H1 (cell line): ENCODE measurements at regions of chr4 and their contacts with region 1.

Region 1: DNA sequence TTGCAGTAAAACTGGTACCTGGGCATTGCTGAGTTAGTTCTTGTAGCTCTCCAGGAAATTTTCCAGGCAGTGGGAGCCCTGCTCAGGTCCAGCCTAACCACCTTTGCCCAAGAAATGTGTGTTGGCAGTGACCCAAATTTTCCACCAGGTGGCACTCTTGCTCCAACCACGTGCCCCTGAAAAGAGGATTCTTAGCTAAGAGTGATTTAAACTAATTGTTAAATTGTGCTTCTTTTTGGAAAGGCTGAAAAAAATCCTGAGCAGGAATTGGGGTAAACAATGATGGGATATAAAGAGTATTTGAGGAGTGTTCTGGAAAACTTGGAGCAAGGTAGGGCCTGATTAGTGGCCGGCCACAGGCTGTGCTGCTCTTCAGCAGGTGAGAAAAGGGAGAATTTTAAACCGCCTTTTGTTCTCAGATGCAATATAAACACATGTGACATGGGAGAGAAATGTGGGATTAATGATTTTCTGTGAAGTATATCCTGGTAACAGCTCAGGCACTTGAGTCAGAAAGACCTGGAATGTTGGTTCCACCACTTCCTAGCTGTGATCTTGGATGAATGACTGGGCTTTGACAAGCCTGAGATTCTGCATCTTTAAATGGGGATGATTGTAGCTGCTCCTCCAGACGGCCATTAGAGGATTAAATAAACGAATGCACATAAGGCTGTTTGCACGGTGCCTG is 219.6 kb downstream of the PTTG2 start:
- DNase-seq: peak; percentile 41 to 86
- H3K4me3 ChIP-seq: no peak overlapping the region
- H3K27ac ChIP-seq: no peak overlapping the region
- H3K4me1 ChIP-seq: no peaks in the 10 kb centered on the region
- H3K27me3 ChIP-seq: no peaks in the 10 kb centered on the region
- CTCF ChIP-seq: peak; percentile 74 to 86 (median 84)
- EP300 ChIP-seq: no peak
- POLR2A ChIP-seq: no peak
- RAD21 ChIP-seq: peak; percentile 96 to 97

Region 2: DNA sequence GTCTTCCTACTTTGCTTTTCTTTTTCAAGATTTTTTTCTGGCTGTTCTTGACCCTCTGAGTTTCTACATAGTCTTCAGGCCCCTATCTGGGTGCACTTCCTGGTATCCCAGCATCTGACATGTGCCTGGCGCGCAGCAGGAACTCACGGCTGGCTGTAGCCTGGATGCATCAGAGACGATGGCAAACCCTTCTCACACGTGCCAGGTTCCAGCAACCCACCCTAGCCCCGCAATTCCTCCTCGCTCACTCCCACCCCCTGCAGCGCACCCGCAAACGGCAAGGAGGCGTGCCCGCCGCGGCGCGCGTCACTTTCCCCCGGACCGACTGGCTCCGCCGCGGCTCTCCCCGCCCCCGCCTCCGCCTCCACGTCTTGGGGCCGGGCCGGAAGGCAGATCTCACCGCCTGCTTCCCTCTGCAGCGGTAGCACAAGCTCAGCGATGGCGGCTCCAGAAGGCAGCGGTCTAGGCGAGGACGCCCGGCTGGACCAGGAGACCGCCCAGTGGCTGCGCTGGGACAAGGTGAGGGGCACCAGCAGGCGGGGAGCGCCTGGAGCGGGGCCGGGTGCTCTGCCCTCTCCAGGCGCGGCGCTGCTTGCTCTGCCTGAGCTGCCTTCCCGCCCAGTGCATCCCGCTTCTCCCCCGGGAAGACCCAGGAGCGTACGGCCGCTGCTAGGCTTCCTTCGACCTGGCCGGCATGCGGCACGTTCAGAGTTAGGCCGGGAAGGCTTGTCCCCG is 353.4 kb before region 1 on chr4 and contains the start of gene PGM2:
- CTCF ChIA-PET with region 1: no interaction called
- POLR2A ChIA-PET with region 1: no interaction called
- DNase-seq: peak; percentile 59 to 95
- H3K4me3 ChIP-seq: peak within 1 kb of the TSS; percentile 66 to 77 (median 72)
- H3K27ac ChIP-seq: peak within 1 kb of the TSS; percentile 41; the same call in 1 of the 2 replicates
- H3K4me1 ChIP-seq: peaks cover 0 to 5% (median 4%) of the 10 kb centered on the region in 4 experiments; a peak in 4 of 7 replicates
- H3K27me3 ChIP-seq: peaks cover 0 to 15% (median 7%) of the 10 kb centered on the region in 4 experiments; a peak in 5 of 7 replicates
- CTCF ChIP-seq: no peak
- EP300 ChIP-seq: no peak
- POLR2A ChIP-seq: peak; percentile 76 to 85
- RAD21 ChIP-seq: no peak
- total RNA-seq, gene PGM2: 34.3 and 38.0 TPM in 2 replicates

Region 3: DNA sequence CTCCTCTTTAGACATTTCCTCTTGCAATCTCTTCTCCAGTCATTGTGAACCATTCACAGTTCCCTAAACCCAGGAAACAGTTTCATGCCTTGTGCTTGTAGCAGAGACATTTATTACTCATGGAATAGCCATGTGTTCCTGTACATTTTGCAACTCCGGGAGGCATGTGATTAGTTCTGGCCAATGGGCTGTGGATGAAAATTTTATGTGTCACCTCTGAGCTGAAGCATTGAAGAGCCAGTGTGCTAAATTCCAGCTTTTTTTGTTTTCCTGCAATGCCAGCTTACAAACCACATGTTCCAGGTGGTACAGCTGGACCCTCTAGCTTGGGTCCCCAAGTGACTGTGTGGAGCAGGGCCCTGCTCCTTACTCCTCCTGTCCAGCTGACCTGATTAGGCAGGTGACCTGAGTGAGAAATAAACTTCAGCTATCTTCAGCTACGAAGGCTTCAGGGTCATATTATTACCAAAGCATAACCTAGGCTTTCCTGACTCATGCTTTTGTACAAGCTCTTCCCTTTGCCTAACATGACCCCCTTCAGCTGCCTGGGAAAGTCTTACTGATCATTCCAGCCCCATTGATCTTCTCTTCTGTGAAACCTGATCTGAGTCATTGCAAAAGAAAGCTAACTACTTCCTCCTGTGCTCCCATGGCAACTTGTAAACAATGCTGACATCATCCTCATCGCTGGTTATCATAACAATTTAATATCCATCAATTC is 19.2 kb before region 1 on chr4:
- CTCF ChIA-PET with region 1: interaction called, 13 read pairs
- POLR2A ChIA-PET with region 1: no interaction called
- DNase-seq: no peak
- H3K4me3 ChIP-seq: no peak overlapping the region
- H3K27ac ChIP-seq: no peak overlapping the region
- H3K4me1 ChIP-seq: peaks cover 0 to 10% (median 2%) of the 10 kb centered on the region in 4 experiments; a peak in 5 of 7 replicates
- H3K27me3 ChIP-seq: no peaks in the 10 kb centered on the region
- CTCF ChIP-seq: no peak
- EP300 ChIP-seq: peak in 1 of 2 experiments; percentile 77; a peak in 1 of 3 replicates
- POLR2A ChIP-seq: no peak
- RAD21 ChIP-seq: no peak

Region 4: GRCh38 chr4:38202242-38202641 is 22.4 kb after region 1 on chr4:
- CTCF ChIA-PET with region 1: interaction called, 19 read pairs
- POLR2A ChIA-PET with region 1: no interaction called
- DNase-seq: no peak
- H3K4me3 ChIP-seq: no peak overlapping the region
- H3K27ac ChIP-seq: no peak overlapping the region
- H3K4me1 ChIP-seq: no peaks in the 10 kb centered on the region
- H3K27me3 ChIP-seq: no peaks in the 10 kb centered on the region
- CTCF ChIP-seq: no peak
- EP300 ChIP-seq: no peak
- POLR2A ChIP-seq: no peak
- RAD21 ChIP-seq: no peak

Region 5: DNA sequence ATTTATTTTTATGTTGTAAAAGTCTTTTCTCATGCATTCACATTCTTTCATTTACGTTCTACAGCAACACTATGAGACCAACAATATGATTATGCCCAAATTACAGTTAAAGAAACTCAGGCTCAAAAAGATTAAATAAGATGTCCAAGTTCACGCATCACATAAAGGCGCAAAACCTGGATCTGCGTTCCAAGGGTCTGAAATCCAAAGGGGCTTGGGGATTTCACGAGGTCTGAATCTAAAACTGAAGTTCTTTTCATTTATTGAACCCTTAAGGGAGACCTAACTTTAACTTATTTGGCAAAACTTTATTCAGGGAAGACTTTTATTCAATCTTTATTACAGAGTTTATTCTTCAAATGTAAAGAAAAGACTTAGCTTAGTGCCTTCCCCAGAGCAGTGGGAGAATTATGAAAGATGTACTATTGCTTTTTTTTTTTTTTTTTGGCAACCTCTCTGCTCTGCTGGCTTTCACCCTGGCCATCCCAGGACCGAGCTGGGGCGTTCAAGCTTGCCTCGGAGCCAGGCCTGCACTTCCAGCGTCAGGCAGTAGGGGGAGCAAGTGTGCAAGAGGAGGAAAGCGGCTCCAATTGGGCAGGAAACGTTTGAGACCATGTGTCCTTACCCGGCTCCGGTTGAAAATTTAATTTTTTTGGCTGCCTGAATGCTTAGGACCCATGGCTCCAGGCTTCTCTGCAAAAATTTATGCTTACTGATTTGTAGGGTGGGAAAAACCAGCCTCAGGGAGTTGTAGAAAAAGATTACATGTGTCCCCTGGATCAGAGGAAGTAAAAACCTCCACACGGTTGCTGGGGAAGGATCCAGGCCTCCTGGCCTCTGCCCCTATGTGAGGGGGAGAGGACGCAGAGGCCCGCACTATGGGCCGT is 139.9 kb after region 1 on chr4:
- CTCF ChIA-PET with region 1: interaction called, 20 read pairs
- POLR2A ChIA-PET with region 1: interaction called, 4 read pairs
- DNase-seq: peak; percentile 76 to 100
- H3K4me3 ChIP-seq: no peak overlapping the region; a peak in 1 of 8 replicates
- H3K27ac ChIP-seq: no peak overlapping the region
- H3K4me1 ChIP-seq: peaks cover 0 to 3% (median under 1%) of the 10 kb centered on the region in 4 experiments; a peak in 1 of 7 replicates
- H3K27me3 ChIP-seq: no peaks in the 10 kb centered on the region
- CTCF ChIP-seq: peak; percentile 86 to 94 (median 94)
- EP300 ChIP-seq: no peak
- POLR2A ChIP-seq: no peak
- RAD21 ChIP-seq: peak; percentile 91 to 92

Region 6: GRCh38 chr4:38612646-38613414 is 433.0 kb after region 1 on chr4:
- CTCF ChIA-PET with region 1: no interaction called
- POLR2A ChIA-PET with region 1: no interaction called
- DNase-seq: no peak
- H3K4me3 ChIP-seq: no peak overlapping the region
- H3K27ac ChIP-seq: no peak overlapping the region
- H3K4me1 ChIP-seq: peaks cover 0 to 5% (median 1%) of the 10 kb centered on the region in 4 experiments; a peak in 2 of 7 replicates
- H3K27me3 ChIP-seq: no peaks in the 10 kb centered on the region
- CTCF ChIP-seq: no peak
- EP300 ChIP-seq: no peak
- POLR2A ChIP-seq: no peak
- RAD21 ChIP-seq: no peak

Region 7: GRCh38 chr4:38730830-38731646 is 551.2 kb after region 1 on chr4:
- CTCF ChIA-PET with region 1: interaction called, 79 read pairs
- POLR2A ChIA-PET with region 1: no interaction called
- DNase-seq: peak; percentile 62 to 96
- H3K4me3 ChIP-seq: no peak overlapping the region
- H3K27ac ChIP-seq: no peak overlapping the region
- H3K4me1 ChIP-seq: peaks cover 0 to 3% (median 1%) of the 10 kb centered on the region in 4 experiments; a peak in 2 of 7 replicates
- H3K27me3 ChIP-seq: no peaks in the 10 kb centered on the region
- CTCF ChIP-seq: peak; percentile 88 to 94 (median 91)
- EP300 ChIP-seq: no peak
- POLR2A ChIP-seq: no peak
- RAD21 ChIP-seq: peak; percentile 95 to 97